GM18951 (cell line): ENCODE measurements at regions of chr2 and their contacts with region 1.

Region 1: GRCh38 chr2:171416009-171416926 is 17.5 kb downstream of the METTL8 start:
- POLR2A ChIP-seq: peak; percentile 41

Region 2: GRCh38 chr2:170475878-170476277 is 940.4 kb before region 1 on chr2:
- in situ Hi-C with region 1: no loop called
- POLR2A ChIP-seq: no peak

Region 3: DNA sequence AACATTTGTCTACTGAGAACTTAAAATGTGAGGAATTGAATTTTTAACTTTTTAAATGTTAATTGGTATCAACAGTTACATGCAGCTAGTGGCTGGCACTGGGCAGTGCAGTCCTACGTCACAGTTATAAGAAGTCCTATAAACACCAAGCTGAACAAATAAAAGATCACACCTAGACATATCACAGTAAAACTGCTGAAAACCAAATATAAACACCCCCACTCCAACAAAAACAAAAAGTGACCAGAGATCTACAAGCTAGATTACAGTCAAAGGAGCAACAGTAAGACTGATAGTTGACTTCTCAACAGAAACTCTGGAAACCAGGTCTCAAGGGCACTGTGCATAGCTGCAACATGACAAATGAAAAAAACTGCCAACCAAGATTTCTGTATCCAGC is 274.9 kb before region 1 on chr2:
- in situ Hi-C with region 1: loop called (anchors 10 kb)
- POLR2A ChIP-seq: no peak